AG04449 (cell line): ENCODE measurements at regions of chr4 and their contacts with region 1.

Region 1: GRCh38 chr4:159206427-159206871 is 103.6 kb downstream of the RAPGEF2 start:
- DNase-seq: peak; percentile 21
- H3K4me3 ChIP-seq: no peak overlapping the region
- CTCF ChIP-seq: no peak

Region 2: DNA sequence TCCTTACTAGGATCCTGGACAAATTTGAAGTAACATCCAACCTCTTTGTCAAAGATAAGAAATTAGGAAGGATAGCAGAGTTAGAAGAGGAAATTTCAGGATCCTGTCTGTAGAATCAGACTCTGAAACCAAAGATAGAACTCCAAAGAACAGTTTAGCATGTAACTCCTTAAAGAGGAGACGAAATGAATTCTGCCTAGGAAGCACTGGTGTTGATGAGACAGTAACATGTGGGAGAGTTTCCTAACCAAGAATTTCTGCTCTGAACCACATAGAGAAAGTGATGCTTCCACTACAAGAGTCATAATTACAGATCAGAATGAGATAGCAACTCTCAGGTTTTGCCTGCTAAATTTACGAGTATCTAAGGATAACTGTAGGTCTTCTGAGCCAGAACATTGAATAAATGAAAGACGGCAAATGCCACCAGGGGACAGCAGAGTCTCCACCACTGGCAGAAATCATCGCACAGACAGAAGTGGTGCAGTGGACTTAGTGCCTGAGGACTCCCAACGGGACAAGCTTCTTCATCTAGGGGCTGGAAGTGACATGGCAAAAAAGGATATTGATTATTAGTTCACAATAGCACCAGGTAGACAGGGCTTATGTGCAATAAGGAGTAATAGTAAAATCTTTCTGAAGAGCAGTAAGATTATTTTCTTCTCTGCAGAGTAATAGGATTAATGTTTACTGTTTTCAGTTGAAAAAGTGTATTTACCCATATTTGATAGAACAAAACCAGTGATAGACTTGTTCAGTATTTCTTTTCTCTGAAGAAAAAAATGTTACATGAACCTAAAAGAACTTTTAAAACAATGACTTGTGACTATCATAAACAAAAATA is 476.5 kb before region 1 on chr4:
- CTCF ChIA-PET with region 1: interaction called, 13 read pairs
- POLR2A ChIA-PET with region 1: no interaction called
- DNase-seq: no peak
- H3K4me3 ChIP-seq: no peak overlapping the region
- CTCF ChIP-seq: peak; percentile 79

Region 3: DNA sequence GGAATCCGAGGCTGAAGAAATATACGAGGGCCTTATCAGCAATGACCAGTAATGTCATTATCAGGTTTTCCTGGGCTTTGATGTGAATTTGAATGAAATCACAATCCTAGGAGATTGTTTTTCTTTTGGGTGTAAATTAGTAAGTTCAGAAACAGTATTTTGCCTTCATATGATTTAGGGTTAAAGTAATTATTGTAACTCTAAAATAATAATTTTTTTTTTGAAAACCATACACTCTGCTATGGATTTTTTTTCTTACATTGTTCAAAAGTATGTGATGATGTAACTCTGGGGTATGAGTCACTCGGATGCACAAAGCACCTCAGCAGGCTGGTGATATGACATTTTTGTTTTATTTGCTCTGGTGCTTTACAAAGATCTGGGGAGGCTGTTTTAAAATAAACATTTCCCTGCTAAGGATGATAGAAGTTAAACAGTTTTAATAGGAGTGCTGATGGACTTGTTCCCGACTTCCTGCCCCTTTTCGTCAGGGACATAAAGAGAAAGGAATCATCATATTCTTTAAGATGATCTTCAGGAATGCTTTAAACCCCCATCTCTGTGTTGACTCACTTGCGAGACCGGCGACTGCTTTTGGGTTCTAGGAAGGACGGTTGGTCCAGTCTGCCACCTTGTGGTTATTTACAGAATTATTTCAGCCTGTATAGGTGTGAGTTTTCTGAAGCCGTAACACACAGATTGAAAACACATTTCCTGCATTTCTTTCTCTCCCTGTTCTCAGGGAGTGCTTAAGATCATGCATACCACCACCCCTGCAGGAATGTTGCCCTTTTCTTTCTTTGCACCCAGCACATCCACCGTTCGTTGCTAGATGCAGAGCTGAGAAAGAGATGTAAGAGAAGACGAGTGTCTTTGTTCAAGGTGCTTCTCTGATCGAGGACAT is 31.1 kb before region 1 on chr4:
- CTCF ChIA-PET with region 1: interaction called, 10 read pairs
- POLR2A ChIA-PET with region 1: no interaction called
- DNase-seq: peak; percentile 67
- H3K4me3 ChIP-seq: peak overlapping the region; percentile 27
- CTCF ChIP-seq: peak; percentile 50

Region 4: DNA sequence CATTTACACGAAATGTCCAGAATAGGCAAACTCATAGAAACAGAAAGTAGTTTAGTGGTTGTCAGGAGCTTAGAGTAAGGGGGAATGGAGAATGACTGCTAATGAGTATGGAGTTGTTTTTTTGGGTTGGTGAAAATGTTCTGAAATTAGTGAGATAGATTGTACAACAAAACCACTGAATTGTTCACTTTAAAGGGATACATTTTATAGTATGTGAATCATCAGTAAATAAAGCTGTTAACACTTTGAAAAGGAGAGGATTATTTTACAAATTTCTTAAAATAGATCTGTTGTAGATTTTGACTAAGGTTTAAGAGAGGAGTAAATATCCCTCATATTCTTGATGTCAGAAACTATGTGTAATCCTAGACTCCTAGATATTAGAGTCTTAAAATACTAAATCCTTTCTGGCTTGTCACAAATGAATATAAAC is 20.8 kb before region 1 on chr4:
- CTCF ChIA-PET with region 1: interaction called, 79 read pairs
- POLR2A ChIA-PET with region 1: no interaction called
- DNase-seq: no peak
- H3K4me3 ChIP-seq: no peak overlapping the region
- CTCF ChIP-seq: no peak